ENCODE measurements at regions of chr2 and their contacts with region 1.

Region 1: GRCh38 chr2:136059036-136059472 is 58.9 kb downstream of the CXCR4 start:
- DNase-seq: no peak
- H3K4me3 Mint-ChIP-seq: no peak overlapping the region
- H3K27ac Mint-ChIP-seq: peak overlapping the region; percentile 36
- H3K4me1 Mint-ChIP-seq: peaks cover 54% of the 10 kb centered on the region
- H3K27me3 Mint-ChIP-seq: no peaks in the 10 kb centered on the region

Region 2: GRCh38 chr2:135960656-135961551 is 98.2 kb before region 1 on chr2:
- CTCF ChIA-PET with region 1: no interaction called
- POLR2A ChIA-PET with region 1: interaction called, 27 read pairs
- DNase-seq: peak; percentile 33
- H3K4me3 Mint-ChIP-seq: peak overlapping the region; percentile 53
- H3K27ac Mint-ChIP-seq: peak overlapping the region; percentile 92
- H3K4me1 Mint-ChIP-seq: peaks cover 58% of the 10 kb centered on the region
- H3K27me3 Mint-ChIP-seq: no peaks in the 10 kb centered on the region

Region 3: GRCh38 chr2:135974036-135974435 is 85.0 kb before region 1 on chr2:
- CTCF ChIA-PET with region 1: no interaction called
- POLR2A ChIA-PET with region 1: no interaction called
- DNase-seq: no peak
- H3K4me3 Mint-ChIP-seq: no peak overlapping the region
- H3K27ac Mint-ChIP-seq: no peak overlapping the region
- H3K4me1 Mint-ChIP-seq: peaks cover 54% of the 10 kb centered on the region
- H3K27me3 Mint-ChIP-seq: no peaks in the 10 kb centered on the region

Region 4: DNA sequence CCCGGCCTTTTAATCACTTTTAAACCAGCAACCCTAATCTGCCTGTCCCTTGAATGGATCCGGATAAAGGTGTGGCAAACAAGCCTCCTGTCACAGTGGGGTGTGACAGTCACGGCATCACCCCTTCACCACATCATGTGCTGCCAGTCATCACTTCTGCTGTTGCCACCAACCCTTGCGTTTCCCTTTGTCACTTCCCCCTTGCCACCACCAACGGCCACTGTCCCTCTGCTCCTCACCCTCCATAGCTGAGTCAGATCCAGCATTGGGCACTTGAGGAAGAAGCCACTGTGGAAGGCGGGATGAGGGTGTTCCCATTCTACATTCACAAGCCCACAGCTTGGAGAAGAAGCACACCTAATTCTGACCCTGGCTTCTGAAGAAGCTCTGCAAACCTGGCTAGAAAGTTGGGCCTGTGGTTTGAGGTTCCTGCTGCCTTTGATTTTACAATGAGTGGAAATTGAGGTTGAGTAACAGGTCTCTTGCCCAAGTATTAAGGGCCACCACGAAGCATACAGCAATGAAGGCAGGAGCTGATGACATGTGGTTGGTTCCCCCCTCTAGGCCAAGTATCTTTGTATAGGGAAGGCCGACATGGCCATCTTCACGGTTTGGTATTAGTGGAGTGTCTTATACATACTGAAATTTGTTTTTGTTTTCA is 50.7 kb before region 1 on chr2:
- CTCF ChIA-PET with region 1: interaction called, 5 read pairs
- POLR2A ChIA-PET with region 1: interaction called, 138 read pairs
- DNase-seq: peak; percentile 90
- H3K4me3 Mint-ChIP-seq: peak overlapping the region; percentile 50
- H3K27ac Mint-ChIP-seq: peak overlapping the region; percentile 94
- H3K4me1 Mint-ChIP-seq: peaks cover 68% of the 10 kb centered on the region
- H3K27me3 Mint-ChIP-seq: no peaks in the 10 kb centered on the region

Region 5: GRCh38 chr2:136112317-136113208 is 53.5 kb after region 1 on chr2:
- CTCF ChIA-PET with region 1: no interaction called
- POLR2A ChIA-PET with region 1: interaction called, 36 read pairs
- DNase-seq: no peak
- H3K4me3 Mint-ChIP-seq: no peak overlapping the region
- H3K27ac Mint-ChIP-seq: no peak overlapping the region
- H3K4me1 Mint-ChIP-seq: peaks cover 36% of the 10 kb centered on the region
- H3K27me3 Mint-ChIP-seq: no peaks in the 10 kb centered on the region

Region 6: GRCh38 chr2:136384531-136385303 is 325.7 kb after region 1 on chr2:
- CTCF ChIA-PET with region 1: interaction called, 10 read pairs
- POLR2A ChIA-PET with region 1: interaction called, 10 read pairs
- DNase-seq: peak; percentile 64
- H3K4me3 Mint-ChIP-seq: peak overlapping the region; percentile 11
- H3K27ac Mint-ChIP-seq: peak overlapping the region; percentile 91
- H3K4me1 Mint-ChIP-seq: peaks cover 45% of the 10 kb centered on the region
- H3K27me3 Mint-ChIP-seq: no peaks in the 10 kb centered on the region

Measured in activated CD4-positive, alpha-beta memory T cell treated with anti-CD3 and anti-CD28 coated beads, Interleukin-2, amount 10 ng/mL, durations not matched to agents 7 days and 5 days (primary cell).